ENCODE measurements at regions of chr7 and their contacts with region 1.

Region 1: GRCh38 chr7:28921822-28922221 is 36.3 kb downstream of the TRIL start:
- DNase-seq: peak; percentile 44
- H3K4me3 ChIP-seq: no peak overlapping the region
- H3K27ac ChIP-seq: no peak overlapping the region
- H3K4me1 ChIP-seq: peaks cover 4% of the 10 kb centered on the region
- H3K27me3 ChIP-seq: no peaks in the 10 kb centered on the region
- CTCF ChIP-seq: peak; percentile 82 to 90

Region 2: DNA sequence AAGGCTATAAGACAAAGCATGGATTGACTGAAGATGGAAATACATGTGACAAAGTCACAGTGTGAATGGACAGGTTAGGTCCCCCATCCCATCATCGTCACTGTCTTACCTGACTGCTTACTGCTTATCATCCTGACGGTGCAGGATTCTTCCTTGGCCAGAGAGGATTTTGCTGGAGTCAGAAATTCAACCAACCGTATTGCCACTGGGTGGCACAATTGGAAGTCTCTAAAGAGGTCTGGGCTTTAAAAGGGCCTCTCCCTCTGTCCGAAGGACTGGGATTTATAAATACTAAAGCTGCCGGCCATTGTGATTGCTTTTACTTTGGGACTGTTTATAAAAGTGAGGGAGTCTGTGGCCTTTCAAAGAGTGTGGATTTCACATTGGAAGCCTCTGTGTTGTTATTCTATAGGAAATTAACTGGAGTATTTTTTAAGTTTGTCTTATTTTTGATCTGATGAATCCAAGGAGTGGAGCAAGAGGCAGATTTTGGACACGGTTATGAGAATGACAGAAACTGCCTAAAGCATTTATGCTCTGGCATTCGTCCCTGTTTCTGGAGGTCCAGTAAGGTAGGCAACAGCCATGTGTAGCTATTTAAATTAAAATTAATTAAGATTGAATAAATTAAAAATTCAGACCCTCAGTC is 622.8 kb before region 1 on chr7:
- CTCF ChIA-PET with region 1: no interaction called
- dilution Hi-C with region 1: no loop called
- in situ Hi-C with region 1: no loop called
- intact Hi-C with region 1: loop called (anchors 1 kb)
- DNase-seq: peak; percentile 60
- H3K4me3 ChIP-seq: no peak overlapping the region
- H3K27ac ChIP-seq: no peak overlapping the region
- H3K4me1 ChIP-seq: peaks cover 13% of the 10 kb centered on the region
- H3K27me3 ChIP-seq: no peaks in the 10 kb centered on the region
- CTCF ChIP-seq: peak; percentile 54 to 68

Region 3: DNA sequence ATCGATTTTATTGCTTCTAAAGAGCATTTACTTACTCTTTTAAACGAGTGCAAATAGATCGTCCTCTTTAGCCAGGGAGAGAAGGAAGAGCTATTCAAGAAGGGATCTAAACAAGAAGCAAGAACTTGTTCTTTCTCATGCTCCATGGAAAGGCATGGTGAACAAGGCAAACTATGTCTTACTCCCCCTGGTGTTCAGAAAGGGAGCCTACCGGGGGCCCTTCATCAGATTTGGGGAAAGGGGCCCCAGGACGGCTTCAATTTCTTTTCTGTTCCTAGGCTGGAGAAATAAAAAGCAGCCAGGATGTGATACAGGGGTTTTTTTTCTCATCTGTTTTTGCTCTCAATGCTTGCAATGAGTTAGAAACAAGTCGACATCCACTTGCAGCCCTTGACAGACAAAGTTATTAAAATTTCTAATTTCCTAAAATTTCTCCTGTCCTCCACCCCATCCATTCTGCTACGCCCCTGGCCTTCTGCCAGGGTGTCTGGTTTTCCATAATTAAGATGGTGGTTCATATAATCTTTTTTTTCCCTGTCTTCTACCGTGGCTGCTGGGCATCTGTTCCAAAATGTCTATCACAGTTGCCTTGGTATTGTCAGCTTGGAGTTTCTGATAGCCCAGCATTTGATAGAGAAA is 295.1 kb before region 1 on chr7:
- CTCF ChIA-PET with region 1: no interaction called
- dilution Hi-C with region 1: no loop called
- in situ Hi-C with region 1: no loop called
- intact Hi-C with region 1: no loop called
- DNase-seq: peak; percentile 39
- H3K4me3 ChIP-seq: no peak overlapping the region
- H3K27ac ChIP-seq: no peak overlapping the region
- H3K4me1 ChIP-seq: peaks cover 5% of the 10 kb centered on the region
- H3K27me3 ChIP-seq: no peaks in the 10 kb centered on the region
- CTCF ChIP-seq: peak; percentile 69 to 75

Region 4: DNA sequence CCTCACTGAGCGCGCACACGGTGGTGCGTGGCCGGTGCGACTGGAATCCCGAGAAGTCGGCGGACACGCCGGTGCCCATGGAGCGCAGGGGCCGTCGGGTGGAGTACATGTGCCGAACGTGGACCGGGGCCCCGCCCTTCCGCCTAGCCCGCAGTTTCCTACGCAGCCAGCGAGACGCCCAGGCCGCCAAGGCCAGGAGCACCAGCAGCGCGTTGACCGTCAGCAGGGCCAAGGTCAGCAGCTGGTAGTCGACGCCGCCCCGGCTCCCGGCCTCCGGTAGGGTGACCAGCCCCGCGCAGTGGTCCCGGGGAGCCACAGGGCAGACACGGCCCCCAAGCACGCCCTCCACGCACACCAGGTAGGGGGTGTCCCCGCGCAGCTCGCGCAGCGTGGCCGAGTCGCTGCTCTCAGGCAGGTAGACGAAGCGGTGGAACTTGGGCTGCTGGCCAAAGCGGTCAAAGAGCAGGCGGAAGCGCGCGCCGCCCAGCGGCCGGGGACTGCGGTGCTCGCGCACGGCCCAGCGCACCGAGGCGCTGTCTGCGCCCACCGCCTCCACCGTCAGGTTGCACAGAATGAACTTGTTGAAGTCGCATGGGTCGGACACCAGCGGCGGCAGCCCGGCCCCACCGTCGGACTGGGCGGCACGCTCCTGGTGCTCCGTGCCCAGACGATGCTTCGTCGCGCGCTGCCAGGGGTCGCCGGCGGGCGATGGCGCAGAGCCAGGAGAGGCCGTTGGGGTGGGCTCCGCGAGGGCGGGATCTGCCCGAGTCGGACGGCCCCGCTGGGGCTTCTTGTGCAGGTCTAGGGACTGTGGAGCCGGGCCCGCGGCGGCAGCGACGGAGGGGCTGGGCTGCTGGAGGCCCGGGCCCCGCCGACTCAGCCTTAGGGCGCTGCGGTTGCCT is 34.1 kb after region 1 on chr7:
- CTCF ChIA-PET with region 1: interaction called, 9 read pairs
- dilution Hi-C with region 1: no loop called
- in situ Hi-C with region 1: no loop called
- intact Hi-C with region 1: loop called (anchors 1 kb)
- DNase-seq: peak; percentile 35
- H3K4me3 ChIP-seq: peak overlapping the region; percentile 15 to 47 (median 38)
- H3K27ac ChIP-seq: no peak overlapping the region
- H3K4me1 ChIP-seq: peaks cover 23% of the 10 kb centered on the region
- H3K27me3 ChIP-seq: peaks cover 35% of the 10 kb centered on the region
- CTCF ChIP-seq: peak; percentile 57 to 77

Region 5: GRCh38 chr7:29189743-29190201 is 267.9 kb after region 1 on chr7:
- CTCF ChIA-PET with region 1: no interaction called
- dilution Hi-C with region 1: no loop called
- in situ Hi-C with region 1: no loop called
- intact Hi-C with region 1: loop called (anchors 1 kb)
- DNase-seq: peak; percentile 34
- H3K4me3 ChIP-seq: no peak overlapping the region
- H3K27ac ChIP-seq: no peak overlapping the region
- H3K4me1 ChIP-seq: peaks cover 4% of the 10 kb centered on the region
- H3K27me3 ChIP-seq: peaks cover 2% of the 10 kb centered on the region
- CTCF ChIP-seq: peak; percentile 83 to 92

Region 6: GRCh38 chr7:29345600-29345999 is 423.8 kb after region 1 on chr7:
- CTCF ChIA-PET with region 1: interaction called, 3 read pairs
- dilution Hi-C with region 1: no loop called
- in situ Hi-C with region 1: loop called in 1 of 2 experiments (anchors 10 kb)
- intact Hi-C with region 1: loop called (anchors 1 kb)
- DNase-seq: peak; percentile 29
- H3K4me3 ChIP-seq: no peak overlapping the region
- H3K27ac ChIP-seq: no peak overlapping the region
- H3K4me1 ChIP-seq: peaks cover 36% of the 10 kb centered on the region
- H3K27me3 ChIP-seq: no peaks in the 10 kb centered on the region
- CTCF ChIP-seq: peak; percentile 52 to 73

Region 7: GRCh38 chr7:29609162-29610037 is 687.6 kb after region 1 on chr7:
- CTCF ChIA-PET with region 1: interaction called, 3 read pairs
- dilution Hi-C with region 1: no loop called
- in situ Hi-C with region 1: no loop called
- intact Hi-C with region 1: loop called (anchors 1 kb)
- DNase-seq: peak; percentile 79
- H3K4me3 ChIP-seq: no peak overlapping the region
- H3K27ac ChIP-seq: no peak overlapping the region
- H3K4me1 ChIP-seq: peaks cover 55% of the 10 kb centered on the region
- H3K27me3 ChIP-seq: no peaks in the 10 kb centered on the region
- CTCF ChIP-seq: peak; percentile 86 to 94